Spleen (tissue), 13 donors: ENCODE measurements at regions of chr12 and their contacts with region 1.

Region 1: GRCh38 chr12:45775964-45776363 is 46.5 kb downstream of the ARID2 start:
- DNase-seq: no peak
- H3K4me3 ChIP-seq: no peak overlapping the region
- H3K27ac ChIP-seq: no peak overlapping the region
- H3K4me1 ChIP-seq: peaks cover 0 to 51% (median 24%) of the 10 kb centered on the region in 6 donors
- H3K27me3 ChIP-seq: no peaks in the 10 kb centered on the region
- CTCF ChIP-seq: no peak
- POLR2A ChIP-seq: no peak

Region 2: DNA sequence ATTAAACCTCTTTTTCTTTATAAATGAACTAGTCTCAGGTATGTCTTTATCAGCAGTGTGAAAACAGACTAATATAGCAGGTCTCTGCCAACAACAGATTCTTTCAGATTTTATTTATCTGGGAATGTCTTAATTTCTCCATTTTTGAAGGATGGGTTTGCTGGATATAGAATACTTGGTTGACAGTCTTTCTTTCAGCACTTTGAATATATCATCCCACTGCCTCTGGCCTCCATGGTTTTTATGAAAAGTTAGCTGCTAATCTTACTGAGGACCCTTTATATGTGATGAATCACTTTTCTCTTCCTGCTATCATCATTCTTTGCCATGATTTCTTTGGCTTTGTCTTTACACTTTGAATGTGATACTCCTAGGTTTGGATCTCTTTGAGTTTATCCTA is 412.1 kb before region 1 on chr12:
- intact Hi-C with region 1: no loop called
- DNase-seq: no peak
- H3K4me3 ChIP-seq: no peak overlapping the region
- H3K27ac ChIP-seq: no peak overlapping the region
- H3K4me1 ChIP-seq: no peaks in the 10 kb centered on the region
- H3K27me3 ChIP-seq: no peaks in the 10 kb centered on the region
- CTCF ChIP-seq: no peak
- POLR2A ChIP-seq: no peak

Region 3: DNA sequence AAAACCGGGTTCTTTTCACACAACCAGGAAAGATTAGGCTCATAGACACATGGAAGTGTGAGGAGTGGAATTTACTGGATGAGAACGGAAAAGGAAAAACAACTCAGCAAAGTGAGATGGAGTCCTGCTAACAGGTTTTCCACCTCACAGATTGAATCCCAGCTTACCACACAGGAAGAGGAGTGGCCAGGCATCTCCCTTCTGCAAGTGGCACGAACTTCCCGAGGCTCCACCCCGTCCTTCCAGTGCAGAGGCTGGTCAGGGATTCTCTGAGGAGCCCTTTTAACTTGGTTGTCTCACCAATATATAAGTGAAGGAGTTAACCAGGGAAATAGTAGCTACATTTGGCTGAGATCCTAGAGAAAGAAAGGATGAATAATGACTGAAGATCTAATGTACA is 111.6 kb after region 1 on chr12:
- intact Hi-C with region 1: loop called (anchors 10 kb)
- DNase-seq: no peak
- H3K4me3 ChIP-seq: no peak overlapping the region
- H3K27ac ChIP-seq: no peak overlapping the region
- H3K4me1 ChIP-seq: no peaks in the 10 kb centered on the region
- H3K27me3 ChIP-seq: no peaks in the 10 kb centered on the region
- CTCF ChIP-seq: no peak
- POLR2A ChIP-seq: no peak